GM23248 (cell line): ENCODE measurements at regions of chr3 and their contacts with region 1.

Region 1: DNA sequence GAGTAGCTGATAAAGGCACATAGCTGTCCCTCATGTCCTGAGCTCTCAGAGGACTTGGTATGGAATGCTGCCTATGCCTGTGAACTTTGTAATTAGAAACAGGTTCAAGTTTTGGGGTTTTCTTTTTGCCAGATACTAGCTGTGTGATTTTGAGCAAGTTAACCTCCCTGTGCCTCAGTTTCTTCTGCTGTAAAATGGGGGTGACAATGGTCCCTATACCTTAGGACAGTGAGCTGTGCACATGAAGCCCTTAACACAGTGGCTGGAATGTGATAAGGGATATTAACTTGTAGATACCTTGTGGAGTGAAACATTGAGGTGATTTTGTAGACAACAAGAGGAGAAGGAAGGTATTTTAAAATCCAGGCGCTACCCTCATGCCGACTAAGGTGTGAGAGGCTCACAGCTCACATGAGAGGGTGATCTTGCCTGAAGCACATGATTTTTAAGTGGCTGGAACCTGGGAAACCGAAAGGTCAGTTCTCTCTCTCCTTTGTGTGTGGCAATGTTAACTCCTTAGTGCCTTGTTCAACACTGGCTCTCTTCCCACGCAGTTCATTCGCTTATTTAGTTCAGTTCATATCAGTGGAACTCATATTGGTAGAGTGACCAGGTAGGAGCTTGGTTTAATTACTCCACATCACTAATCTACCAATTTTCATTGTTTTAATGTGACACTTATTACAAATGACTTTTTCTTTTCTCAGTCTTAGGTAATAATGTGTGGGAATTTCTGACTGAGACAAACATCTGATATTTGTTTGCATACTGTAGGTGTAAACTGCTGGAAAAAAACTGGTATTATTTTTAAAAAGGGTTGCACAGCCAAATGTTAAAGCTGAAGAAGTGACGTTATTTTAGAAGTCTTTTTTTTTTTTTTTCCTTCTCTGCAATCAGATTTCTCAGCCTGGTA is 236.2 kb downstream of the ITPR1 start:
- DNase-seq: no peak
- H3K4me3 ChIP-seq: no peak overlapping the region
- H3K27ac ChIP-seq: no peak overlapping the region
- H3K4me1 ChIP-seq: no peaks in the 10 kb centered on the region
- H3K27me3 ChIP-seq: no peaks in the 10 kb centered on the region

Region 2: DNA sequence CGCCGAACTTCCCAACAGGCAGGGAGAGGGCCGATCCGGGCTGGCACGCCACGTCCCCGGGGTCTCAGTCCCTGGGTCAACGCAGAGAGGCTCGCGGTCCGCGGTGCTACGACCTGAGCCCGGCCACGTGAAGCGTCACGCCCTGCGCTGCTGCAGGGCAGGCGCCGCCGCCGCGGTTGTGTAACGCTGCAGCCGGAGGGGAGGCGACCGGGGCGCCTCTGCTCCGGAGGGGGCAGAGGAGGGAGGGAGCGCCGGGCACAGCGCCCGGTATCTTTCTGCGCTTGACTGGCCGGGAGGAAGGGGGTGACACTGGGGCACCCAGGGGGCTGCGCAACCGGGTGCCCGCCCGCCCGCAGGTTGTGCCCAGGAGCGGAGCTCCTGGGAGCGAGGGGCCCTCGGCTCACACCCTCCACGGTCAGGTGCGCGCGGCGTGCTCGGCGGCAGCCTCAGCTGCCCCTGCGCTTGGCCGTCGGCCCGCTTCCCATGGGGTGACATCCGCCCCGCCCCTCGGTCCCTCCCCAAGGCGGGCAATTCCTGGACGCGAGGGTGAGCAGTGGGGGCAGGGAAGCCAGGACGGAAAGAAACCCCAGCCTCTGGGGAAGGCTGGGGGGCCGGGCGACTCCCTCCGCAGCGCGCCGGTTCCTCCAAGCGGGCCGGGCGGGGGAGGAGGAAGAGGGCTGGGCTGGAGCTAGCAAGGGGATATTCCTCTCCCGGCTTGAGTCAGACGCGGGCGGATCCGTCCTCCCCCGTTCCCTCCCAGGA is 249.1 kb after region 1 on chr3:
- in situ Hi-C with region 1: loop called (anchors 5 kb)
- DNase-seq: peak; percentile 99
- H3K4me3 ChIP-seq: peak overlapping the region; percentile 72
- H3K27ac ChIP-seq: peak overlapping the region; percentile 98
- H3K4me1 ChIP-seq: peaks cover 26% of the 10 kb centered on the region
- H3K27me3 ChIP-seq: no peaks in the 10 kb centered on the region